ENCODE measurements at regions of chr10 and their contacts with region 1.

Region 1: GRCh38 chr10:132382231-132382922 is 14.6 kb upstream of the PWWP2B start:
- DNase-seq: no peak
- ATAC-seq: no peak
- H3K4me3 ChIP-seq: no peak overlapping the region
- H3K27ac ChIP-seq: no peak overlapping the region
- H3K4me1 ChIP-seq: no peaks in the 10 kb centered on the region
- H3K27me3 ChIP-seq: no peaks in the 10 kb centered on the region

Region 2: GRCh38 chr10:132458593-132459300 is 76.4 kb after region 1 on chr10:
- intact Hi-C with region 1: loop called in 3 of 4 experiments (anchors 2 to 5 kb)
- DNase-seq: peak; percentile 50 to 87 (median 86)
- ATAC-seq: peak; percentile 46 to 66
- H3K4me3 ChIP-seq: no peak overlapping the region
- H3K27ac ChIP-seq: no peak overlapping the region
- H3K4me1 ChIP-seq: peaks cover 4% of the 10 kb centered on the region
- H3K27me3 ChIP-seq: no peaks in the 10 kb centered on the region

Measured in right cardiac atrium (tissue), 5 donors.